Activated T-helper 2 cell treated with anti-CD3 and anti-CD28 coated beads, Interferon-gamma antibody, Interleukin-2, Interleukin-4, amounts not matched to agents 10 μg/mL and 5 μg/mL and 100 μg/mL, durations not matched to agents 14 hours and 24 hours and 36 hours (primary cell): ENCODE measurements at regions of chr19 and their contacts with region 1.

Region 1: GRCh38 chr19:36605101-36605876 is at the start of gene ZNF382:
- DNase-seq: peak; percentile 81
- H3K4me3 Mint-ChIP-seq: peak within 1 kb of the TSS; percentile 87
- H3K27ac Mint-ChIP-seq: peak within 1 kb of the TSS; percentile 89
- H3K4me1 Mint-ChIP-seq: peaks cover 17% of the 10 kb centered on the region
- H3K27me3 Mint-ChIP-seq: no peaks in the 10 kb centered on the region
- total RNA-seq, gene ZNF382: 8.8 and 10.8 TPM in 2 replicates

Region 2: GRCh38 chr19:36330216-36330615 is 275.1 kb before region 1 on chr19:
- intact Hi-C with region 1: no loop called
- DNase-seq: no peak
- H3K4me3 Mint-ChIP-seq: no peak overlapping the region
- H3K27ac Mint-ChIP-seq: no peak overlapping the region
- H3K4me1 Mint-ChIP-seq: peaks cover 4% of the 10 kb centered on the region
- H3K27me3 Mint-ChIP-seq: no peaks in the 10 kb centered on the region

Region 3: GRCh38 chr19:36573020-36573885 is 32.0 kb before region 1 on chr19 and contains the start of gene ZNF529:
- intact Hi-C with region 1: loop called (anchors 1 kb)
- DNase-seq: peak; percentile 85
- H3K4me3 Mint-ChIP-seq: peak within 1 kb of the TSS; percentile 93
- H3K27ac Mint-ChIP-seq: peak within 1 kb of the TSS; percentile 95
- H3K4me1 Mint-ChIP-seq: peaks cover 24% of the 10 kb centered on the region
- H3K27me3 Mint-ChIP-seq: no peaks in the 10 kb centered on the region
- total RNA-seq, gene ZNF529: 14.8 and 15.2 TPM in 2 replicates